ENCODE measurements at regions of chr9 and their contacts with region 1.

Region 1: DNA sequence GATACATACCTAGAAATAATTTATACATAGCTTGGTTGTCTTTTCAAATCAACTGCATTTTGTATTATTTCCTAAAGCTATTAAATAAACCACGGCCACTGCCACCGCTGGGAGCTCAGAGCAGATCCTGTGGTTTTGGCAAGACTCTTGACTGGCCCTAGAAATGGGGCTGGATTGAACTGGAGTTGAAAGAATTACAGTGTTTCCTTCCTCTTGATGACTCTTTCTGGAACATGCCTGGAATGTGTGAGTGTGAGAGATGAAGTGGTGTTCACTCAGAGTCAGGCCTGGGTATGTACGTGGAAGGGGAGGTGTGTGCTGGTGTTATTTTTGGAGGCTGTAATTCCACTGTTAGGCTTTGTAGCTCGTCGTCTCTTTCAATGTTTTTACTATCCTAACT is 45.9 kb downstream of the TEK start:
- DNase-seq: peak; percentile 95
- ATAC-seq: peak; percentile 84
- H3K4me3 ChIP-seq: no peak overlapping the region
- H3K27ac ChIP-seq: peak overlapping the region; percentile 63
- H3K4me1 ChIP-seq: peaks cover 18% of the 10 kb centered on the region
- H3K27me3 ChIP-seq: no peaks in the 10 kb centered on the region
- CTCF ChIP-seq: no peak
- POLR2A ChIP-seq: no peak
- RAD21 ChIP-seq: no peak

Region 2: GRCh38 chr9:27131731-27132130 is 23.2 kb before region 1 on chr9:
- CTCF ChIA-PET with region 1: interaction called, 3 read pairs
- POLR2A ChIA-PET with region 1: no interaction called
- dilution Hi-C with region 1: no loop called
- in situ Hi-C with region 1: no loop called
- intact Hi-C with region 1: loop called (anchors 2 kb)
- DNase-seq: peak; percentile 81
- ATAC-seq: peak; percentile 83
- H3K4me3 ChIP-seq: no peak overlapping the region
- H3K27ac ChIP-seq: peak overlapping the region; percentile 87; the same call in 1 of the 2 replicates
- H3K4me1 ChIP-seq: peaks cover 12% of the 10 kb centered on the region
- H3K27me3 ChIP-seq: no peaks in the 10 kb centered on the region
- CTCF ChIP-seq: no peak
- POLR2A ChIP-seq: no peak
- RAD21 ChIP-seq: no peak